ENCODE measurements at regions of chr7 and their contacts with region 1.

Region 1: GRCh38 chr7:66844552-66845378 is 76.3 kb upstream of the TMEM248 start:
- DNase-seq: peak; percentile 93 to 98 (median 96)
- H3K4me3 ChIP-seq: peak overlapping the region; percentile 40 to 100 (median 91)
- H3K27ac ChIP-seq: peak overlapping the region; percentile 10 to 98 (median 90)
- H3K27me3 ChIP-seq: no peaks in the 10 kb centered on the region
- CTCF ChIP-seq: peak in 37 of 56 donors; percentile 10 to 53 (median 35)

Region 2: GRCh38 chr7:66493235-66494181 is 351.3 kb before region 1 on chr7:
- intact Hi-C with region 1: loop called in 1 of 2 experiments (anchors 10 kb)
- DNase-seq: peak; percentile 96 to 100 (median 98)
- H3K4me3 ChIP-seq: peak overlapping the region; percentile 66 to 100 (median 90)
- H3K27ac ChIP-seq: peak overlapping the region; percentile 69 to 99 (median 94)
- H3K27me3 ChIP-seq: no peaks in the 10 kb centered on the region
- CTCF ChIP-seq: peak in 39 of 56 donors; percentile 4 to 59 (median 32)

Region 3: GRCh38 chr7:66654123-66654732 is 190.5 kb before region 1 on chr7:
- intact Hi-C with region 1: loop called (anchors 10 kb)
- DNase-seq: peak; percentile 98 to 99 (median 98)
- H3K4me3 ChIP-seq: peak overlapping the region; percentile 68 to 99 (median 92)
- H3K27ac ChIP-seq: peak overlapping the region; percentile 90 to 99 (median 98)
- H3K27me3 ChIP-seq: no peaks in the 10 kb centered on the region
- CTCF ChIP-seq: peak in 54 of 56 donors; percentile 3 to 76 (median 52)

Region 4: DNA sequence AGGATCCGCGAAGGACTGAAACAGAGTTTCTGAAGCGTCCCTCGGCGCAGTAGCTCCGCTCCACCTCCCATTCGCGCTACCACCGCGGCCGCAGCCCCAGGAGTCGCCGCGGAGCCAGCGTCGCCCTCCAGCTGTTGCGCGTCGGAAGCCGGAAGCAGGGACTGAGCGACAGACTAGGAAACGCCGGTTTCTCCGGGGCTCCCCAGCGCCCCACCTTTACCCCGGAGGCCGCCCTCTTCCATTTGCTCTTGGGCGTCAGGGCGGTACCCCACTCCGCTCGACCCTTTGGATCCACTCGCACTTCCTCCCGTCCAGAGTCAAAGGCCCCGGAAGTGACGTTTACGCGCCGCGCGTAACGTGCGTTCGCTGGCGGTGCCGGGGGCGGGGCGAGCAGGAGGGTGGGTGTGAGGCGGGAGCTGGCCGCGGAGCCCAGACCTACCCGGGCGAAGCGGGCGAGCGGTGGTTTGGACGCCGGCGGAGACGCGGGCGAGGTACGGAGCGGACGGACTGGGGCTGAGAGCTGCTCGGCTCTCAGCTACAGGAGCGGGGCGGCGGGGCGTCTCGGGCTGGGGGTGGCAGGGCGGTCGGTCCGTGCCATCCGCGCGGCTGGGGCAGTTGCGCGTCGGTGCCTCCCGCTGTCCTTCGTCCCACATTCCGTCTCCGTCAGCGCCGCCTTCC is 104.3 kb before region 1 on chr7 and contains the start of gene RABGEF1:
- intact Hi-C with region 1: loop called in 1 of 2 experiments (anchors 5 kb)
- DNase-seq: peak; percentile 95 to 99 (median 97)
- H3K4me3 ChIP-seq: peak within 1 kb of the TSS; percentile 56 to 100 (median 95)
- H3K27ac ChIP-seq: peak within 1 kb of the TSS; percentile 68 to 99 (median 94)
- H3K27me3 ChIP-seq: no peaks in the 10 kb centered on the region
- CTCF ChIP-seq: peak in 24 of 56 donors; percentile 5 to 44 (median 21)
- total RNA-seq, gene RABGEF1: 30.2 to 59.5 (median 45.8) TPM

Region 5: DNA sequence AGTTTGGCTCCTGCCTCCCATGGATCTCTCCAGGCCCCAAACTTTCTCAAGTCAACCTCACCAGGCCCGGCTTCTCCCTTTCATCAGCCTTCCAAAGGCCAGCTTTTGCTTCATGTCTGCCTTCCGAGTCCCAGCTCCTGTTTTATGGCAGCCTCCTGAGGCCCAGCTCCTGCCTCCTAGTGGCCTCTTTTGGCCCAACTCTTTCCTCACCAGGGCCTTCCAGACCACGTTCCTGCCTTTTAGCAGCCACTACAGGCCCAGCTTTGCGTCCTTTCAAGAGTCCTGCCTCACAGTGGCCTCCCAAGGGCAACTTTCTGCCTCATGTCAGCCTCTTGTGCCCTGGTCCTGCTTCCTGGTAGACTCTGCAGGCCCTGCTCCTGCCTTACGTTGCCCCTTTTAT is 60.9 kb after region 1 on chr7:
- intact Hi-C with region 1: no loop called
- DNase-seq: no peak
- H3K4me3 ChIP-seq: no peak overlapping the region
- H3K27ac ChIP-seq: no peak overlapping the region
- H3K27me3 ChIP-seq: no peaks in the 10 kb centered on the region
- CTCF ChIP-seq: no peak

Region 6: DNA sequence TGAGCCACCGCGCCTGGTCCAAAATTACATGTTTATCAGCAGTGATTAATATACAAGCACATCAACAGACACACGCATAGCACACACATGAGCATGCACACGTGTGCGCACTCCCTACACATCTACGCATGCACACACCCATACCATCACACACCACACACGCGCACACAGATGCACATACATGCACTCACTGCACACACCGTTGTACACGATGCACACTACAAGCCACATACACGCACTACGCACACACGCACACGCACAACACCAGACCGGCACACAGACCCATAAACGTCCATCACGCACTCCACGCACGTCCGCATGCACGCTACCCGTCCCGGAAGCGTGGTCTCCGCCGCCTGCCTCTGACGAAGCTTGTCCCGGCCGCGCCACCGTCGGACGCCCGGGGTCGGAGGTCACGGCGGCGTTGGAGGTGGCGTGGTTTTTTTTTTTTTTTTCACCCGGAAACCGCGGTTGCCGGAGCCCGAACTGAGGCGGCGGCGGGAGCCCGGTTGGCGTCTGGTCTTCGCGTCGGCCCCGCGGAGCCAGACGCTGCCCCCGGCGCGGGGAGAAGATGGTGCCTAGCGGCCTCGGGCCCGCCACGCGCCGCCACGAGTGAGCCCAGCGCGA is 76.1 kb after region 1 on chr7 and contains the start of gene TMEM248:
- intact Hi-C with region 1: loop called (anchors 2 kb)
- DNase-seq: peak; percentile 80 to 92 (median 88)
- H3K4me3 ChIP-seq: peak within 1 kb of the TSS; percentile 62 to 99 (median 92)
- H3K27ac ChIP-seq: peak within 1 kb of the TSS in 52 of 59 donors; percentile 0 to 87 (median 68)
- H3K27me3 ChIP-seq: no peaks in the 10 kb centered on the region
- CTCF ChIP-seq: peak in 23 of 56 donors; percentile 7 to 47 (median 24)
- total RNA-seq, gene TMEM248: 55.9 to 106 (median 78.3) TPM

Measured in dorsolateral prefrontal cortex (tissue), 120 donors.